Sigmoid colon (tissue), 7 donors: ENCODE measurements at regions of chr2 and their contacts with region 1.

Region 1: DNA sequence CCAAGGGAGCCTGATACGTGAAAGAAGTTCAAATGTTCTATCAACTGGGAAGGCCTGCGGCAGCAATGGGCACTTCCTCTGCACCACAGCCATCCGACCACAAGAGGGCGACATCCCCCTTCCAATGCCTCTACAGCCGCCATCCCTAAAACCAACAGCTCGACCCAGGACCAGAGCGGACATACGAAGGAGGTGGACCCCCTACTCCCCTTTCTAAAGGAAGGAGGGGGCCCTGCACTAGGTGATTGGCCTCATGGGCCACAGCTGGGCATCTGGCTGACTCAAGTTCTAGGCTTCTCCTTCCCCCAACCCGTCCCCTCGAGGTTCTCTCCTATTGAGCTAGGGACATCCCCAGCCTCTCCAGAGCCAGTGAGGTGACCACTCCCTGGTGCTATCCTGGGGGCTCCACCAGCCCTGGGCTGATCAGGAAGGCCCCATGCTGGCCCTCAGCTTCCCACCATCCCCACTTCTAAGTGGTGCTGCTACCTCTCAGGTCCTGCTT is 217.2 kb downstream of the TNS1 start:
- DNase-seq: peak; percentile 91
- H3K4me3 ChIP-seq: no peak overlapping the region
- H3K27ac ChIP-seq: peak overlapping the region; percentile 27 to 71 (median 58)
- H3K4me1 ChIP-seq: peaks cover 0 to 17% (median 8%) of the 10 kb centered on the region in 4 donors
- H3K27me3 ChIP-seq: no peaks in the 10 kb centered on the region
- CTCF ChIP-seq: peak; percentile 90 to 97 (median 94)
- EP300 ChIP-seq: no peak
- POLR2A ChIP-seq: no peak

Region 2: GRCh38 chr2:217722883-217723472 is 62.6 kb before region 1 on chr2:
- intact Hi-C with region 1: no loop called
- DNase-seq: no peak
- H3K4me3 ChIP-seq: no peak overlapping the region
- H3K27ac ChIP-seq: no peak overlapping the region
- H3K4me1 ChIP-seq: no peaks in the 10 kb centered on the region
- H3K27me3 ChIP-seq: no peaks in the 10 kb centered on the region
- CTCF ChIP-seq: no peak
- EP300 ChIP-seq: no peak
- POLR2A ChIP-seq: no peak

Region 3: GRCh38 chr2:217886720-217887309 is 101.2 kb after region 1 on chr2:
- intact Hi-C with region 1: loop called (anchors 2 kb)
- DNase-seq: peak; percentile 92
- H3K4me3 ChIP-seq: no peak overlapping the region
- H3K27ac ChIP-seq: peak overlapping the region; percentile 94 to 98 (median 98)
- H3K4me1 ChIP-seq: peaks cover 0 to 82% (median 49%) of the 10 kb centered on the region in 4 donors
- H3K27me3 ChIP-seq: no peaks in the 10 kb centered on the region
- CTCF ChIP-seq: peak; percentile 80 to 88 (median 87)
- EP300 ChIP-seq: no peak
- POLR2A ChIP-seq: no peak

Region 4: DNA sequence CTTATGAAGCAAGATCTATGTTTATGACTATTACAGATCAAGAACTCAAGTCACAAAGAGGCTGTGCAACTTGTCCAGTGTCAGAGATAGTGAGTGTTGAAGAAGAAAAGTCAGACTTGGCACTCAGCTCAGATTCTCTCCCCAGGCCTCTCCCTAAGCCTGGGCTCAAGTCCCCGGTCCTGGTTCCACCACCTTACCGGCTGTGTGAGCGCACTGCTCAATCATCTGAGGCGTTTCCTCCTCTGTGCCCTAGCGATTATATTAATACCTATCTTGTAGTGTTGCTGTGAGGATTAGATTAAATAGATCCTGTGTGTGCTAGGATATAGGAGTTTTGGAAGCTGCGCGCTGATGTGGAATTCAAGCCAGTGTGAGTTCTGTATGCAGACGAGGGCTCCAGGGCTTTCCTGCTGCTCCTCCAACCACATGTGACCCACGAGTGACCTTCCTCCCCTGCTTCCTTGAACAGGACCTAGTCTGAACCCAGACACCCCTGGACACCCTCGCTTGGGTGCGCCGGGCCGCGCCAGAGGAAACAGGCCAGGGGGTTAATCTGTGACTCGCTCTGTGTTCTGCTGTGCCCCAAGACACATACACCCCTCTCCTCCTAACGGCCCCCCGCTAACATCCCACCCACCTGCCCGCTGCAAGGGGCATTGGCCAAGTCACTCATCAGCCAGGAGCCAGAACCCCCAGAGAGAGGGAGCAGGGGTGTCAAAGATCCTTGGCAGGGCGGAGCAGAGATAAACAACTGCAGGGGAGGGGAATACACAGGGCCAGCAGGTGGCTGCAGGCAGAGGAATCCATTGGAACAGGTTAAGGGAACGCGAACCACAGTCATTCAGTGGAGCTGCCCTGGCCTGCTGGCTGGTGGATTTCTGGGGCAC is 178.9 kb after region 1 on chr2:
- intact Hi-C with region 1: no loop called
- DNase-seq: peak; percentile 66
- H3K4me3 ChIP-seq: peak overlapping the region in 2 of 4 donors; percentile 31
- H3K27ac ChIP-seq: peak overlapping the region; percentile 84 to 98 (median 91)
- H3K4me1 ChIP-seq: peaks cover 0 to 84% (median 78%) of the 10 kb centered on the region in 4 donors
- H3K27me3 ChIP-seq: no peaks in the 10 kb centered on the region
- CTCF ChIP-seq: no peak
- EP300 ChIP-seq: no peak
- POLR2A ChIP-seq: no peak

Region 5: GRCh38 chr2:217988014-217988839 is 202.6 kb after region 1 on chr2:
- intact Hi-C with region 1: loop called (anchors 1 kb)
- DNase-seq: peak; percentile 93
- H3K4me3 ChIP-seq: peak overlapping the region in 2 of 4 donors; percentile 11 to 17
- H3K27ac ChIP-seq: peak overlapping the region; percentile 67 to 81 (median 73)
- H3K4me1 ChIP-seq: peaks cover 0 to 25% (median 17%) of the 10 kb centered on the region in 4 donors
- H3K27me3 ChIP-seq: no peaks in the 10 kb centered on the region
- CTCF ChIP-seq: peak; percentile 84 to 96 (median 92)
- EP300 ChIP-seq: no peak
- POLR2A ChIP-seq: no peak

Region 6: DNA sequence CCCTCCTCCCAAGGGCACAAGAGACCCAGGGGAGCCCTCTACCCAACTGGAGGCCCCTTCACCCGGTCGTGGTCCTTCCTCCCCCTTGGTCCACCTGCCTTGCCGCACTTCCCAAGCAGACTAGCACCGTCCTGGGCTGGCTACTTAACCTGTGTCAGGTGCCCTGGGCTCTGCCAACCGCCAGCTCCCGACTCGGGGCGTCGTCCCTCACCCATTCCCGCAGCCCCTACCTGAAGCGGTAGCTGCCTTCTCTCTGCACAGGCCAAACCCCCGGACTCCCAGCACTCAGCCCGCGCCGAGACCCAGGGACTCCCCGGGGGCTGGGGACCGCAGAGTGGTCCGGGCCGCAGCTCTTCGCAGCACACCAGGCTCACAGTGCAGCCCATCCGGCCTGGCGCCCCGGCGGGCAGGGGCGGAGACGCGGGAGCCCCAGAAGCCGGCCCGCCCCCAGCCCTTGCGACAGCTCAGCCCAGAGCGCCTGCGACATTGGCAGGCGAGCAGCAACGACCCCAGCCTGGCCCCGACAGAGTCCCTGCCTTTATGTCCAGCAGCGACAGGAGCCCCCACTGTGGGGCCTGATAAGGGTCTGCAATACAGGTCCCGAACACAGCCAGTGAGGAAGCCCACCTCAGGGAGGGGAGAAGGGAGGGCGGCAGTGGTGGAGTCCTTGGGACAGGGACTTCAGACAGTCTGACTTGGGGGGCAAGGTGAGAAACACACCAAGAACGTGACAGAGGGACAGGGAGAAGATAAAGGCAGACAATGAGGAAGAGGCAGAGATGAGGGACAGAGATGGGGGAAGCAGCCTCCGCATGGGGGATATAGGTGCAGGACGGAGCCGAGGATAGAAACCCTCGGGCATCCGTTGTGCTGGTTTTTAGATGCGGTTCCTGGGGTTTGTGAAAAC is 248.2 kb after region 1 on chr2:
- intact Hi-C with region 1: loop called (anchors 2 kb)
- DNase-seq: no peak
- H3K4me3 ChIP-seq: peak overlapping the region in 1 of 4 donors; percentile 9
- H3K27ac ChIP-seq: no peak overlapping the region
- H3K4me1 ChIP-seq: peaks cover 0 to 19% (median 10%) of the 10 kb centered on the region in 4 donors
- H3K27me3 ChIP-seq: peaks cover 0 to 6% (median 0%) of the 10 kb centered on the region in 3 donors
- CTCF ChIP-seq: no peak
- EP300 ChIP-seq: no peak
- POLR2A ChIP-seq: no peak